Gastrocnemius medialis (tissue), 4 donors: ENCODE measurements at regions of chr13 and their contacts with region 1.

Region 1: GRCh38 chr13:114281351-114282040 is at the start of gene UPF3A:
- DNase-seq: peak; percentile 84 to 90
- ATAC-seq: peak; percentile 91 to 92
- H3K4me3 ChIP-seq: peak within 1 kb of the TSS; percentile 79 to 94 (median 86)
- H3K27ac ChIP-seq: peak within 1 kb of the TSS; percentile 95 to 98 (median 96)
- H3K4me1 ChIP-seq: peaks cover 13 to 16% of the 10 kb centered on the region in 2 donors
- H3K27me3 ChIP-seq: no peaks in the 10 kb centered on the region
- CTCF ChIP-seq: no peak
- POLR2A ChIP-seq: peak; percentile 81 to 82
- total RNA-seq, gene UPF3A: 9.1 to 43.9 (median 24.0) TPM

Region 2: GRCh38 chr13:114212158-114212495 is 69.4 kb before region 1 on chr13:
- in situ Hi-C with region 1: no loop called
- intact Hi-C with region 1: no loop called
- DNase-seq: no peak
- ATAC-seq: no peak
- H3K4me3 ChIP-seq: no peak overlapping the region
- H3K27ac ChIP-seq: no peak overlapping the region
- H3K4me1 ChIP-seq: no peaks in the 10 kb centered on the region
- H3K27me3 ChIP-seq: peaks cover 0 to 8% (median 4%) of the 10 kb centered on the region in 3 donors
- CTCF ChIP-seq: no peak
- POLR2A ChIP-seq: no peak

Region 3: DNA sequence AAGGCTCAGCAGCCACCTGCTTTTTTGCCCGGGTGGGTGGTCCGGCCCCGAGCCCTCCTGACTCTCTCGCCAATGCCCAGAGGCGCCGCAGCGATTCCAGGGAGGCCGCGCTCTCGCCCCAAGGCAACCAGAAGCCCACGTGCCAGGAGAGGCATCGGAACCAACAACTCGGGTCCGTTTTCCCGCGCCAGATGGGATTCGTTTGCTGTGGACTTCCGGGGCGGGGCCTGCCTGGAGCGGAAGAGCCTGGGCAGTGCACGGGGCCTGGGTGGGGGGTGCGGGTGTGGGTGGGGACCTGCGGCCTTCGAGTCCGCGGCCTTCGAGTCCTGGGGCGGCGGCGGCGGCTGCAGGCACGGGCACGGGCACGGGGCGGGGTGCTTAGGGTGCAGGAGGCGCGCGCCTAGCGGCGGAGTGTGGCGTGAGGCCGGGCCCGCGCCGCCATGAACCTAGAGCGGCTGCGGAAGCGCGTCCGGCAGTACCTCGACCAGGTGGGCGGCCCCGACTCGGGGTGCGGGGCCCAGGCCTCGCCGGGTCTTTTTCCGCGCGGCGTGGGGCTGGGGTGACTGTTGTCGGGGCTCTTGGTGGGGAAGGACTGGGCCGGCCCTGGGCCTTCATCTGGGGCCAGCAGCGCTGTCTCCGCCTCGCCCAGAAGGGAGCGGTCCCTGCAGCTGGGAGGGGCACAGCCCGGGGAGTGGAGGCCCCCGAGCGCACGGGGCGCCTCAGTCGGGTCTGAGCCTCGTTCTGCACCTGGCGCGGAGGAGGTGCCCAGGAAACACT is 46.7 kb before region 1 on chr13 and contains the start of gene CDC16:
- in situ Hi-C with region 1: no loop called
- intact Hi-C with region 1: loop called (anchors 1 kb)
- DNase-seq: peak; percentile 85 to 91
- ATAC-seq: peak; percentile 94 to 96
- H3K4me3 ChIP-seq: peak within 1 kb of the TSS; percentile 72 to 94 (median 85)
- H3K27ac ChIP-seq: peak within 1 kb of the TSS; percentile 82 to 90 (median 86)
- H3K4me1 ChIP-seq: peaks cover 5 to 12% of the 10 kb centered on the region in 2 donors
- H3K27me3 ChIP-seq: no peaks in the 10 kb centered on the region
- CTCF ChIP-seq: no peak
- POLR2A ChIP-seq: peak; percentile 60 to 62
- total RNA-seq, gene CDC16: 18.5 to 22.2 (median 20.5) TPM

Region 4: DNA sequence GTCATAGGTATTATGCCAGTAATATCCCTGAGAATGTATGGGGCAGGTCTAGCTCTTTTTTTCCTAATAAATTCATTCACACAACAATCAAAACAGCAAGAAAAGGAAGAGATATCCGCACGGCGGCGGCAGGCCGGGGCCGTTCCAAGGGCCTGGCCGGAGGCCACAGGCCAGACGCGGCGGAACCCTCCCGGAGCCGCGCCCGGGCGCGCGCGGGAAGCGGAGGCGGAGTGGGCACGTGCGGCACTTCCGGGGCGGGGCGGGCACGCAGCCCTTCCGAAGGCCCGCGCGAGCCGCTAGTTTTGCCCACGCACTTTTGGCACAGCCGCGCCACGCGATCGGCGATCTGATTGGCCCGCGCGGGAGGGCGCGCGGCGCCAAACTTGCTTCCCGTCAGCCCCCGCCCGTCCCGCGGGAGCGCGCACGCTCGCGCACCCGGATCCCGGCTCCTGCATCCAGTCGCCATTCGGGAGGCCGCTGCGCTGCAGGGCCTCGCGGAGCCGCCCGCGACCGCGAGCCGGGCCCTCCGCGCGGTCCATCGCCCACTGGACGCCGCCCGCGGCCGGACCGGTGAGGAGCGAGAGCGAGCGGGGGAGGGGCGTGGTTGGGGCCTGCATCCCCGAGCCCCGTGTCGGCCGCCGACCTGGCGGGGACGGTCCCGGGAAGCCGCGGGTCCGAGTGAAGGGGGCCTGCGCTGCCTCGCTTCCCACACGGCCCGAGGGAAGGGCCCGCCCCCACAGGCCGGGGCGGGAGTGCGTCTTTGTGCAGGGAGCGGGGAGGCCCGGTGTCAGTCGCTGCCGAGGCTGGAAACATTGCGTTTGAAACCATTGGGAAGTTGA is 32.8 kb after region 1 on chr13 and contains the start of gene CHAMP1:
- in situ Hi-C with region 1: no loop called
- intact Hi-C with region 1: loop called (anchors 1 kb)
- DNase-seq: peak; percentile 90 to 95
- ATAC-seq: peak; percentile 93 to 94
- H3K4me3 ChIP-seq: peak within 1 kb of the TSS; percentile 70 to 80 (median 74)
- H3K27ac ChIP-seq: peak within 1 kb of the TSS; percentile 85 to 91 (median 86)
- H3K4me1 ChIP-seq: peaks cover 20 to 28% of the 10 kb centered on the region in 2 donors
- H3K27me3 ChIP-seq: no peaks in the 10 kb centered on the region
- CTCF ChIP-seq: no peak
- POLR2A ChIP-seq: peak; percentile 84 to 88
- total RNA-seq, gene CHAMP1: 18.2 to 20.3 (median 19.8) TPM